Activated B cell treated with CpG ODN at 0.5 μM for 24 hours (primary cell): ENCODE measurements at regions of chr1 and their contacts with region 1.

Region 1: DNA sequence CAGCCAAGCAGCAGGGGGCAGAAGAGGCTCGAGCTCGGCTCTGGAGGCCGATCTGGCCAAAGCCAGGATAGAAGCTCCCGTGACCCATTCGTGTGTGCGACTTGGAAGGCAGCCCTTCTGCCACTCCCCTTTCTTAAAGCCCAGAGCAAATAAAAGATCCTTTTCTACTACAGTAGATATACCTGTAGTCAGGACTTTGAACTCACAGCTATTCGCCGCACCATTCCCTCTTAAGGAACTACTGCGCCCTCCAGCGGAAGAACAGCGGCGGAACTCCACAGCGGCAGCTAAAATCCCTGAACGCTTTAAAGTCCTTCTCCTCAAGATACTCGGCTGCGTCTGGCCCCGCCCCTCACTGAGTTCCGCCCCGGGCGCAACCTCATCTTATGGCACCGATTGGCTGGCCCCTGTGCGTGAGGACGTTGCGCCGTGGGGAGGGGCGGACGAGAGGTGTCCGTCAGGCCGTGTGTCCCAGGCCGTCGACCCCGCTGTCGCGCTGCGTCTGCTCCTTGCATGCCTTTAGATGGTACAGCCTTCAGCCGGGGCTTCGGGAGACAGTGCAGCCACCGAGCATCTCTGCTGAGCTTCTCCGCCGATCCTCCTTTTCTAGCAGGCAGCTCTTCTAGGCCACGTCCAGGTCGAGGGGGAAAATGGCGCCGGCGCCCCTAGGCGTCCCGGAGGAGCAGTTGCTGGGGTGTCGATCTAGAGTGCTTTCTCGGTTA is at the start of gene LRIG2:
- DNase-seq: peak; percentile 96
- ATAC-seq: peak; percentile 96
- H3K4me3 Mint-ChIP-seq: peak within 1 kb of the TSS; percentile 95
- H3K27ac Mint-ChIP-seq: peak within 1 kb of the TSS; percentile 95
- H3K4me1 Mint-ChIP-seq: peaks cover 31% of the 10 kb centered on the region
- H3K27me3 Mint-ChIP-seq: no peaks in the 10 kb centered on the region
- CTCF ChIP-seq: peak; percentile 49
- total RNA-seq, gene LRIG2: 23.8 and 30.7 TPM in 2 replicates

Region 2: GRCh38 chr1:112466078-112466660 is 606.7 kb before region 1 on chr1:
- CTCF ChIA-PET with region 1: interaction called, 5 read pairs
- POLR2A ChIA-PET with region 1: no interaction called
- intact Hi-C with region 1: loop called (anchors 2 kb)
- DNase-seq: peak; percentile 81
- ATAC-seq: peak; percentile 93
- H3K4me3 Mint-ChIP-seq: peak overlapping the region; percentile 77
- H3K27ac Mint-ChIP-seq: peak overlapping the region; percentile 88
- H3K4me1 Mint-ChIP-seq: peaks cover 54% of the 10 kb centered on the region
- H3K27me3 Mint-ChIP-seq: peaks cover 16% of the 10 kb centered on the region
- CTCF ChIP-seq: no peak

Region 3: DNA sequence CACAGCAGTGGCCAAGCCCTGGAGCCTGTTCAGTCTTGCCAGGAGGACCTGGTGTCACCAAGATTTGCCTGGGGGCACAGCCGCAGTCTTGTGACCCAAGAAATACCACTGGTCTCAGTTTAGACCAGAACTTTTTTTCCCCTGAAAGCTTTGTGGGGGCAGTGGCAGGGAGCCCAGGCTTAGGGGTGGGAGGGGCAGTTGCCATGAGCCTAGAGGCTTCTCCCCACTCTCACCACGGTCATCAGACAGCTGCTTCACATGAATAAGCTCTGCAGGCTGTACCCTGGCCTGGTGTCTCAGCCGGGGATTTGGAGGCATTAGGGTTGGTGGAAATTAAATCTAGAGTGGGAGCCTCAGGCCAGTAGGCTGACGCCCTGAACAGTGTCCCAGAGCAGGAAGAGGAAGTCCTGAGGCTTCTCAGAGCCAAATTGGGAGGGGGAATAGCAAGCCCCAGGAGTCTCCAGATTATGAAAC is 190.6 kb before region 1 on chr1:
- CTCF ChIA-PET with region 1: interaction called, 15 read pairs
- POLR2A ChIA-PET with region 1: interaction called, 3 read pairs
- intact Hi-C with region 1: loop called (anchors 2 kb)
- DNase-seq: no peak
- ATAC-seq: no peak
- H3K4me3 Mint-ChIP-seq: no peak overlapping the region
- H3K27ac Mint-ChIP-seq: no peak overlapping the region
- H3K4me1 Mint-ChIP-seq: no peaks in the 10 kb centered on the region
- H3K27me3 Mint-ChIP-seq: peaks cover 7% of the 10 kb centered on the region
- CTCF ChIP-seq: no peak

Region 4: DNA sequence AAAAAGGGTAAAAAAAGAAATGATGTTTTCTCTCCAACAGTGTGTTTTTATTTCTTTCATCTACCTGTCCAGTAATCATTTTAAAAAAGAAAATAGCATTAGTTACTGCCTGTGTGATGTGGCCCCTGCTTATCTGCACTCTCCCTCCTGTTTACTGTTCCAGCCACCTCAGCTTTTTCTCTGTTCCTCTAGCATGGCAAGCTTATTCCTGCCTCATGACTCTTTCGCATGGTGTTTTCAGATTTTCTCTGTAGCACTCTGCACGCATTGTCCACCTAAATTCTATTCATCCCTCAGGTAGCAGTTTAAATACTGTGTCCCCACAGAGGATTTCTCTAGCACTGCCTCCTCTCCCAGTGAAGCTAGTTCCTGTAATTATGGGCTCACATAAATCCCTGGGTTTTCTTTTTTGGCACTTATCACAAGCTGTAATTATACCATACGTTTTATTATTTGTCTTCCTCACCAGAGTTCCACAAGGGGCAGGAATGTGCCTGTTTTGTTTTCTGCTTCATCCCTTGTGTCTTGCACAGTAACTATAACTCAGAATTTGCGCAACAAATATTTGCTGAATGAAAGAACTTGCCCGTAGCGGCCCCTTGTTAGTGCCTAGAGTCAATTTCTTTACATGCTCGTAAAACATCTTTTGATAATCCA is 51.4 kb before region 1 on chr1:
- CTCF ChIA-PET with region 1: no interaction called
- POLR2A ChIA-PET with region 1: no interaction called
- intact Hi-C with region 1: no loop called
- DNase-seq: no peak
- ATAC-seq: no peak
- H3K4me3 Mint-ChIP-seq: no peak overlapping the region
- H3K27ac Mint-ChIP-seq: no peak overlapping the region
- H3K4me1 Mint-ChIP-seq: no peaks in the 10 kb centered on the region
- H3K27me3 Mint-ChIP-seq: no peaks in the 10 kb centered on the region
- CTCF ChIP-seq: no peak

Region 5: GRCh38 chr1:113109908-113110554 is 37.1 kb after region 1 on chr1:
- CTCF ChIA-PET with region 1: interaction called, 3 read pairs
- POLR2A ChIA-PET with region 1: interaction called, 8 read pairs
- intact Hi-C with region 1: loop called (anchors 5 kb)
- DNase-seq: no peak
- ATAC-seq: no peak
- H3K4me3 Mint-ChIP-seq: no peak overlapping the region
- H3K27ac Mint-ChIP-seq: no peak overlapping the region
- H3K4me1 Mint-ChIP-seq: no peaks in the 10 kb centered on the region
- H3K27me3 Mint-ChIP-seq: no peaks in the 10 kb centered on the region
- CTCF ChIP-seq: no peak

Region 6: GRCh38 chr1:113490384-113490783 is 417.5 kb after region 1 on chr1:
- CTCF ChIA-PET with region 1: no interaction called
- POLR2A ChIA-PET with region 1: no interaction called
- intact Hi-C with region 1: no loop called
- DNase-seq: no peak
- ATAC-seq: no peak
- H3K4me3 Mint-ChIP-seq: no peak overlapping the region
- H3K27ac Mint-ChIP-seq: no peak overlapping the region
- H3K4me1 Mint-ChIP-seq: no peaks in the 10 kb centered on the region
- H3K27me3 Mint-ChIP-seq: peaks cover 6% of the 10 kb centered on the region
- CTCF ChIP-seq: no peak

Region 7: DNA sequence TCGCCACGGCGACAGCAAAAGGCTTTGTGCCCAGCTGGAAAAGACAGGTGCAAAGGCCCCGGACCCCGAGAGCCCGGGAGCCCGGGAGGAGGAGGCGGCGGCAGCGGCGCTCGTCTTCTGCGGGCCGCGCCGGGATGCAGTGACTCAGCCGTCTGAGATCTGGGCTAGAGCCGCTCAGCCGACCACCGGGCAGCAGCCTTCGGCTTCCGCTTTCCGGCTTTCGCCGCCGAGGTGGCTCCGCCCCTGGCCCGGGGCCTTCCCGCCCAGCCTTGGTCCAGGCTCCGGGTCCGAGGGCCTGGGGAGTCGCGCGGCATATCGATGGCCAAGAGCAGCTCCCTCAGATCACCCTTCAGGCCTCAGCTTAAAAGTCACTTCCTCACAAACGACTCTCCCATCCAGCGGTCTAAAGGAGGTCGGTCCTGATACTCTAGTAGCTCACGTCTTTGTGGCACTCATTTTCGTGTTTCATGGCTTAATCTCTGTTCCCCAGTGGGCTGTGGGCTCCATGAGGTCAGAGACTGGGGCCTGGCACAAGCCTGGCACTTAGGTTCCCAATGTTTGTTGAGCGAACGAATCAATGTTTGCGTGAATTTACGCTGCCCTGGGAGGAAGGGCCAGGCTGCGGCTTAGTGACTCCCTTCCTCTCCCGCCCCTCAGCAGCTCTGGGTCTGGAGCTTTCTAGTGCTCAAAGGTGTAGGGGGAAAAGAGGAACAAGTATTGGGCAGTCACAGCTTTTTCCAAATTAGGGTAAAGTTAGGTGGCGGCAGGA is 686.6 kb after region 1 on chr1 and contains the start of gene PHTF1:
- CTCF ChIA-PET with region 1: interaction called, 5 read pairs
- POLR2A ChIA-PET with region 1: interaction called, 9 read pairs
- intact Hi-C with region 1: loop called (anchors 2 kb)
- DNase-seq: peak; percentile 73
- ATAC-seq: peak; percentile 88
- H3K4me3 Mint-ChIP-seq: peak within 1 kb of the TSS; percentile 94
- H3K27ac Mint-ChIP-seq: peak within 1 kb of the TSS; percentile 98
- H3K4me1 Mint-ChIP-seq: peaks cover 21% of the 10 kb centered on the region
- H3K27me3 Mint-ChIP-seq: no peaks in the 10 kb centered on the region
- CTCF ChIP-seq: no peak
- total RNA-seq, gene PHTF1: 19.2 and 25.0 TPM in 2 replicates

Region 8: GRCh38 chr1:114581335-114582287 is 1508.7 kb after region 1 on chr1 and contains the start of gene BCAS2:
- CTCF ChIA-PET with region 1: no interaction called
- POLR2A ChIA-PET with region 1: no interaction called
- intact Hi-C with region 1: loop called (anchors 10 kb)
- DNase-seq: peak; percentile 81
- ATAC-seq: peak; percentile 97
- H3K4me3 Mint-ChIP-seq: peak within 1 kb of the TSS; percentile 99
- H3K27ac Mint-ChIP-seq: peak within 1 kb of the TSS; percentile 98
- H3K4me1 Mint-ChIP-seq: peaks cover 29% of the 10 kb centered on the region
- H3K27me3 Mint-ChIP-seq: peaks cover 2% of the 10 kb centered on the region
- CTCF ChIP-seq: no peak
- total RNA-seq, gene BCAS2: 33.1 and 36.3 TPM in 2 replicates

Region 9: GRCh38 chr1:114828251-114828650 is 1755.3 kb after region 1 on chr1:
- CTCF ChIA-PET with region 1: no interaction called
- POLR2A ChIA-PET with region 1: no interaction called
- intact Hi-C with region 1: no loop called
- DNase-seq: no peak
- ATAC-seq: no peak
- H3K4me3 Mint-ChIP-seq: no peak overlapping the region
- H3K27ac Mint-ChIP-seq: no peak overlapping the region
- H3K4me1 Mint-ChIP-seq: no peaks in the 10 kb centered on the region
- H3K27me3 Mint-ChIP-seq: peaks cover 5% of the 10 kb centered on the region
- CTCF ChIP-seq: no peak